BJ (cell line): ENCODE measurements at regions of chr1 and their contacts with region 1.

Region 1: DNA sequence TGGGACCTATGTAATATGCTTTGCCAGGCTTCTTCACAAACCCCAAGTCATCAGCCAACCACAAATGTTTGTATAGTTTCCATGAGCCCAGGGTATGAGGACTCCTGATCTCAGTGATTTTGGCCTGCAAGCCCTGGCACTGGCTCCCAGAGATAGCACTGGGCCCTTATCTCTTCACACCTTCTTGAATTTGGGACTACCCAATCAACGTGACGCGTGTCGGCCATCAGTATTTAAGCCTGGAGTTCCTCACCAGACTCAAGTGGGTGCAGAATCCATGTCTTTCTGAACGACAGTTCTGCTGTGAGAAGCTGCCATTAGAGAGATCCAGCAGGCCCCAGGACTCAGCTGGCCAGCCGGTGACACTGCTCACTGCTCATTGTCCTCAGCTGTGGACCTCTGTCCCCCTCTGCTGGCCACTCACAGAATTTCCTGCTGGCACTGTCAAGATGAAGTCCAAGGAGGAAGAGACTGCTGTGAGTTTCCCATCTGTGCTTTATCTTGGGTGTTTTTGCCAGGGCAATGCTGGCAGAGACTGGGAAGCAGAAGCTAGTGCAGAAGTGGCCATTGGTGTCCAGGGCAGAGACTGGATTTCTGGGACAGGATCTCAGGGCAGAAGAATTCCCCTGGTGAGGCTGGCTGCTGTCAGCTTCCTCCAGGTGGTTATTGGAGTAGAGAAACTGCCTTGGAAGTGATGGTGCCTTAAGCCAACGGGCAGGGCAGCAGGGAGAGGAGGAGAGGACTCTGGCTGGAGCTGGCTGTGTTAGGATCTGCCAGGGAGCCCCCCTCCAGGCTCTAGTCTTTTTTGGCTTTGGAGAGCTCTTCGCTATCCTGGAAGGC is 28.4 kb downstream of the TMCC2 start:
- DNase-seq: no peak
- H3K4me3 ChIP-seq: no peak overlapping the region
- H3K27me3 ChIP-seq: no peaks in the 10 kb centered on the region
- CTCF ChIP-seq: peak; percentile 95

Region 2: DNA sequence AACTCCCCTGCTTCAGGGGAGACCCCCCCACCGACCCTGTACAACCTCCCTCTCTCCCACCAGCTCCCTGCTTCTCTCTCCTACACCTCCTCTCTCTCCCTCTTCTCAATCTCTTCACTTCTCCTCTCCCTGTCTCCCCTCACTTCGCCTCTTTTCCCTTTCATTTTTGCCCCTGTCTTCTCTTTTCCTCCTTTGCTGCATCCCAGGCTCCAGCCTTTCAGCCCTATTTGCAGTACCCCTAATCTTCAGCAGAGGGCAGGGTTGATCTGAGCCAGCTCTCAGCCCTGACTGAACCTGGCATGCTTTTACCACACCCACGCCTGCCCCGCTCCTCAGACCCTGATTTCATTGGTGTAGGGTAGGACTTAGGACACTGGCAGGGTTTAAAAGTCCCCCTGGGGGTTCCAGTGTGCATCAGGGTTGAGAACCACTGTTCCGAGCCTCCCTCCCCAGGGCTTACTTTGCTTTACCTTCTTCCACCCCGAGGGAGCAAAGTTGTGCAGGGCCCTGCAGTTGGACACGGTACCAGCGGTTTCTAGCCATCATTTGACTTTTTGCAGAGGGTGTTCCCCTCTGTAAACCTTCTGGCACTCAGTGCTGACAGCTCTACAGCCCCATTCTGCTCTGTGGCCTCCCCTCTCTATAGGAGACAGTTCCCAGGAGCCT is 280.5 kb before region 1 on chr1:
- CTCF ChIA-PET with region 1: interaction called, 33 read pairs
- POLR2A ChIA-PET with region 1: no interaction called
- DNase-seq: no peak
- H3K4me3 ChIP-seq: no peak overlapping the region
- H3K27me3 ChIP-seq: no peaks in the 10 kb centered on the region
- CTCF ChIP-seq: peak; percentile 87

Region 3: DNA sequence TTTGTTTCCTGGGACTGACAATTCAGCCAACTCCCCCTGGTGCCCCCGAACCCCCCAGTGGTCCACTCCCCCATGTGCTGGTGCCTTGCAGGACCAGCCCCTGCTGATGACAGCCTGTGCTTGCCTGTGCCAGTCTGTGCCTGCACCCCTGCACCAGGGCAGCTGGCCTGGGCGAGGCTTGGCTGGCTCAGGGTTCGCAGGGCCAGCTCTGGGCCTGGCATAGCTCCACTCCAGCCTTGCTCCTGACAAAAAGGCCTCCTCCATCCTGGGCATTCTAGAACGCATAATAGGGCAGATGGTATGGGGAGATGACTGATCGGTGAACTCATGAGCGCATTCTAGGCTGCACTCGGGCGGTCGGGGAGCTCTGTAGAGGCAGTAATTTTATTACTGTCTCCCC is 207.8 kb before region 1 on chr1:
- CTCF ChIA-PET with region 1: interaction called, 10 read pairs
- POLR2A ChIA-PET with region 1: no interaction called
- DNase-seq: no peak
- H3K4me3 ChIP-seq: no peak overlapping the region
- H3K27me3 ChIP-seq: peaks cover 41% of the 10 kb centered on the region
- CTCF ChIP-seq: no peak

Region 4: DNA sequence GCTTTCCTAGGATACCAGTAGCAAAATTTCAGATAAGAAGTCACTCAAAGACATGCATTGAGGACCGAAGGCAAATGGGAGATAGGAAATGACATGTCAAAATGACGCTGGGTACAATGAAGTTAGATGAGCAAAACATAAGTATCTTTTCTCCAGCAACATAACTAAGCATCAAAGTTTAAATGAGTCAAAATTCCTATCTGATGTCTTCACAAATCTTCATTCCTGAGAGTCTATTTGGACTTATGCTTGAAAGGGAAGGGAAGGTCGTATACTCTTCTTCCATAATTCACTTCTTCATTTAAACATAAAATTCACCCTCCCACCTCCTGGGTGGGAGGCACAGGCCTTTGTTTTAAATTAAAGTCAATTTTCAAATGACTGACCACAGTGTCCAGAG is 167.8 kb before region 1 on chr1:
- CTCF ChIA-PET with region 1: interaction called, 10 read pairs
- POLR2A ChIA-PET with region 1: no interaction called
- DNase-seq: no peak
- H3K4me3 ChIP-seq: no peak overlapping the region
- H3K27me3 ChIP-seq: no peaks in the 10 kb centered on the region
- CTCF ChIP-seq: no peak

Region 5: DNA sequence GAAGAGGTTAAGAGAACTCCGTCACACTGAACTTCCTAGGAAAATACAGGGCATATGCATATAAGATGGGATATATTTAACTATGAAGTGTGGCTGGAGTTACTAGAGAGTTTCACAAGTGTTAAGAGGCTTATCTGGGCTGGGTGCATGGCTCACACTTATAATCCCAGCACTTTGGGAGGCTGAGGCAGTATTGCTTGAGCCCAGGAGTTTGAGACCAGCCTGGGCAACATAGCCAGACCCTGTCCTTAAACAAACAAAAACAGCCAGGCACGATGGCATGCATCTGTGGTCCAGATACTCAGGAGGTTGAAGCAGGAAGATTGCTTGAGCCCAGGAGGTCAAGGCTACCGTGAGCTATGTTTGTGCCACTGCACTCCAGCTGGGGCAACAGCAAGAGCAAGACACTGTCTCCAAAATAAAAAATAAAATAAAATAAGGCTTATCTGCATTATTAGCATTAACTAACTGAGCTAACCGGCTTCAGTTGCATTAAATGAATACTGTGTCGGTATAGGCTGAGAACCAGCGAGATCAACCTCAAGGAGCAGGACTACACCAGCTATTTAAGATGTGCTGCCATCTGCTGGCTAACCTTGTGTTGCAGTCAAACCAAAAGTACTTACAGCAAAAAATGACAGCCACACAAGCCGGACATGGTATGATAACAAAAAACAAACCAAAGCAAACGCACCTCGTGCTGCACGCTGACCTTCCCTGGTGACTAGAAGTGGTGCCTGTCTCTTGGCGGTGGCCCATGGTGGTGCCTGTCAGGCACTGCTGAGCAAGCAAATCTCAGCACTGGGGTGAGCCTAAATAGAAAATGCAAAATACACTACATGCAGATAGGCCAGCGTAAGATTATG is 114.7 kb before region 1 on chr1:
- CTCF ChIA-PET with region 1: interaction called, 52 read pairs
- POLR2A ChIA-PET with region 1: no interaction called
- DNase-seq: peak; percentile 23
- H3K4me3 ChIP-seq: no peak overlapping the region
- H3K27me3 ChIP-seq: no peaks in the 10 kb centered on the region
- CTCF ChIP-seq: peak; percentile 68

Region 6: GRCh38 chr1:205237526-205238484 is 18.4 kb before region 1 on chr1:
- CTCF ChIA-PET with region 1: interaction called, 67 read pairs
- POLR2A ChIA-PET with region 1: no interaction called
- DNase-seq: no peak
- H3K4me3 ChIP-seq: no peak overlapping the region
- H3K27me3 ChIP-seq: no peaks in the 10 kb centered on the region; the same call in 1 of the 2 replicates
- CTCF ChIP-seq: no peak

Region 7: GRCh38 chr1:205273551-205273982 is 17.4 kb after region 1 on chr1:
- CTCF ChIA-PET with region 1: interaction called, 85 read pairs
- POLR2A ChIA-PET with region 1: no interaction called
- DNase-seq: no peak
- H3K4me3 ChIP-seq: no peak overlapping the region
- H3K27me3 ChIP-seq: no peaks in the 10 kb centered on the region
- CTCF ChIP-seq: peak; percentile 98